PC-3 (cell line): ENCODE measurements at regions of chr9 and their contacts with region 1.

Region 1: DNA sequence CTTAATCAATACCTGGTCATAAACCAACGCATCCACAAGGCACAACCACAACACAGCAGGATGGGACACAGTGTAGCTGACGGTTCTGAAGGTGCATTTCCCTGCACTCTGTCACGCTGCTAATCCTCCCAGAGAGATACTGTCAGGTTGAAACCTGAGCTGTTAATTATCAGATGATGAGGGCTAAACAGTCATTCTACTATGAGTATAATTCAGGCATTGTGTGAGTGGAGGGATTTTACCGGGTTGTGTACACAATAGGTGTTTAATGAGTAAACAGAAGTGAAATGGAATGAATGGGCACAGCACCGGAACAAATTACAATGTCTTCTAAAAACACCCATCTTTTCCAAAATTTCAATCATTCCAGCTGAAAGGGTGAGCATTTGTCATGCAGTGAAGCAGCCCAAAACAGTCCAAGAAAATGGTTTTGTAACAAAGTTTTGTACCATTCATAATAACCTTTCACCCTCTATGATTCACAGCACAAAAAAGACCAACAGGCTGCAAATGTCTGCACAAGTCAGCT is 71.5 kb downstream of the ABCA1 start:
- DNase-seq: peak; percentile 65
- ATAC-seq: peak; percentile 74
- H3K4me3 ChIP-seq: no peak overlapping the region
- H3K27ac ChIP-seq: peak overlapping the region; percentile 94
- H3K4me1 ChIP-seq: peaks cover 41% of the 10 kb centered on the region
- H3K27me3 ChIP-seq: no peaks in the 10 kb centered on the region
- CTCF ChIP-seq: no peak

Region 2: DNA sequence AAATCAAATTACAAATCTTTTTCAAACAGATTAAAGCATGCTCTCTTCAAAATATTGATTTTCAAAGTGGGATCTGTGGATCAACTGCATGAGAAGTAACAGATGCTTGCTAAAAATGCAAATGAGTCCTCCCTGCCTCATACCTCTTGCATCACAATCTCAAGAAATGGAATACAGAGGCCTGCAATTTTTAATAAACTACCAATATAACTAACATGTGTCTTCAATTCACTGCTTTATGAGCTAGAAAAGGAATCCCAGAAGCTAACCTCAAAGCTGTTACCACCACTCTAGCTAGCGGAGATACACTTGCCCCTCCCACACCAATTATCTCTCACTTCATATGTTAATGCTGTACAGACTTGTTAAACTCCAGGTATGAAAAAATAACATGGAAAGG is 266.9 kb before region 1 on chr9:
- CTCF ChIA-PET with region 1: no interaction called
- POLR2A ChIA-PET with region 1: no interaction called
- intact Hi-C with region 1: no loop called
- DNase-seq: no peak
- ATAC-seq: no peak
- H3K4me3 ChIP-seq: no peak overlapping the region
- H3K27ac ChIP-seq: no peak overlapping the region
- H3K4me1 ChIP-seq: no peaks in the 10 kb centered on the region
- H3K27me3 ChIP-seq: no peaks in the 10 kb centered on the region
- CTCF ChIP-seq: no peak

Region 3: GRCh38 chr9:104780799-104781395 is 75.6 kb before region 1 on chr9:
- CTCF ChIA-PET with region 1: no interaction called
- POLR2A ChIA-PET with region 1: no interaction called
- intact Hi-C with region 1: loop called (anchors 2 kb)
- DNase-seq: peak; percentile 75
- ATAC-seq: peak; percentile 72
- H3K4me3 ChIP-seq: no peak overlapping the region
- H3K27ac ChIP-seq: peak overlapping the region; percentile 37; the same call in 1 of the 2 replicates
- H3K4me1 ChIP-seq: peaks cover 13% of the 10 kb centered on the region; the same call in 1 of the 2 replicates
- H3K27me3 ChIP-seq: no peaks in the 10 kb centered on the region
- CTCF ChIP-seq: peak; percentile 79

Region 4: GRCh38 chr9:104810421-104811339 is 45.8 kb before region 1 on chr9:
- CTCF ChIA-PET with region 1: no interaction called
- POLR2A ChIA-PET with region 1: no interaction called
- intact Hi-C with region 1: loop called (anchors 1 kb)
- DNase-seq: peak; percentile 90
- ATAC-seq: peak; percentile 90
- H3K4me3 ChIP-seq: peak overlapping the region; percentile 35
- H3K27ac ChIP-seq: peak overlapping the region; percentile 83
- H3K4me1 ChIP-seq: peaks cover 20% of the 10 kb centered on the region
- H3K27me3 ChIP-seq: no peaks in the 10 kb centered on the region
- CTCF ChIP-seq: no peak

Region 5: GRCh38 chr9:104991144-104991953 is 134.9 kb after region 1 on chr9:
- CTCF ChIA-PET with region 1: no interaction called
- POLR2A ChIA-PET with region 1: interaction called, 3 read pairs
- intact Hi-C with region 1: loop called (anchors 10 kb)
- DNase-seq: peak; percentile 68
- ATAC-seq: peak; percentile 80
- H3K4me3 ChIP-seq: peak overlapping the region; percentile 88
- H3K27ac ChIP-seq: peak overlapping the region; percentile 90
- H3K4me1 ChIP-seq: peaks cover 17% of the 10 kb centered on the region
- H3K27me3 ChIP-seq: no peaks in the 10 kb centered on the region
- CTCF ChIP-seq: no peak

Region 6: DNA sequence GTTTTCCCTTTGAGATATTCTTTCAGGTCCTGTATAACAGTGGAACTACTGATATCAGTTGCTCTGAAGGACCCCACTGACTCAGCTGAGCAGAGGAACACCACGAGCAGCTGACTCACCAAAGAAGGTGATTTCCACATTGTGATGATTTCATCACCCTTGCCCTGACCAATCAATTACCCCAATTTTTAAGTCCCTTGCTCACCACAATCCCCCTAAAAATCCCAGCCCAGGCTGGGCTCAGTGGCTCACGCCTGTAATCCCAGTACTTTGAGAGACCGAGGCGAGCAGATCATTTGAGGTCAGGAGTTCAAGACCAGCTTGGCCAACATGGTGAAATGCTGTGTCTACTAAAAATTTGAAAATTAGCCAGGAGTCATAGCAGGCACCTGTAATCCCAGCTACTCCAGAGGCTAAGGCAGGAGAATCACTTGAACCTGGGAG is 196.8 kb after region 1 on chr9:
- CTCF ChIA-PET with region 1: no interaction called
- POLR2A ChIA-PET with region 1: no interaction called
- intact Hi-C with region 1: loop called (anchors 10 kb)
- DNase-seq: peak; percentile 37
- ATAC-seq: no peak
- H3K4me3 ChIP-seq: no peak overlapping the region
- H3K27ac ChIP-seq: no peak overlapping the region
- H3K4me1 ChIP-seq: peaks cover 21% of the 10 kb centered on the region
- H3K27me3 ChIP-seq: no peaks in the 10 kb centered on the region
- CTCF ChIP-seq: no peak

Region 7: DNA sequence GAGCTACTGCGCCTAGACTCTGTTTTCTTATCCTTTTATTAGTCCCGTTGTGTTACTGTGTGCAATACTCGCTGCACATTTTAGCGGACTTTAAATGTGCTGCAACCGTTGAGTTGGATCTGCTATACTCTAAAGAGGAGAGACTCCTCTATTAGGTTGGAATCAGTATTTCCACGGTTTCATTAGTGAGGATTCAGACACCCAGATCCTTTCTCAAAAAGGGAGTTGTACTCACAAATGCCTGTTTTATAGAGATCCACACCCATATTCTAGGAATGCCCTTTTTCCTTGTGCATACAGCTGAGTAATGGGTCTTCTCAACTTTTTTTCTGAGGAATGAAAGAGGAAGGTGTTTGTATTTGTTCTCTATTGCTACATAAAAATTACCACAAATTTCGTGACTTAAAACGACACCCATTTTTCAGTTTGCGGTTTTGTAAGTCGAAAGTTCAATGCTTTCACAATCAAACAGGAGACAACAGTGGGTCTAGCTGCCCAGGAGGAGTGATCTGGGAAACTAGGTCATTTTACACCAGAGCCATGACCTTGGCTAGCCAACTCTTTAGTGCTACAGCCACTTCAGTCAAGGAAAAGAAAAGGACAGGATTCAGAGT is 335.1 kb after region 1 on chr9:
- CTCF ChIA-PET with region 1: no interaction called
- POLR2A ChIA-PET with region 1: no interaction called
- intact Hi-C with region 1: loop called (anchors 1 kb)
- DNase-seq: peak; percentile 87
- ATAC-seq: peak; percentile 82
- H3K4me3 ChIP-seq: peak overlapping the region; percentile 11; the same call in 1 of the 2 replicates
- H3K27ac ChIP-seq: peak overlapping the region; percentile 92
- H3K4me1 ChIP-seq: peaks cover 29% of the 10 kb centered on the region
- H3K27me3 ChIP-seq: no peaks in the 10 kb centered on the region
- CTCF ChIP-seq: no peak